ENCODE measurements at regions of chr22 and their contacts with region 1.

Region 1: GRCh38 chr22:17742527-17742902 is 31.8 kb downstream of the BID start:
- DNase-seq: peak; percentile 68 to 71
- ATAC-seq: peak; percentile 89 to 92
- H3K4me3 ChIP-seq: no peak overlapping the region
- H3K27ac ChIP-seq: no peak overlapping the region
- H3K4me1 ChIP-seq: no peaks in the 10 kb centered on the region
- CTCF ChIP-seq: peak; percentile 61
- EP300 ChIP-seq: no peak
- POLR2A ChIP-seq: no peak
- RAD21 ChIP-seq: peak; percentile 68 to 79

Region 2: GRCh38 chr22:17559188-17559587 is 183.3 kb before region 1 on chr22:
- CTCF ChIA-PET with region 1: interaction called, 19 read pairs
- POLR2A ChIA-PET with region 1: no interaction called
- DNase-seq: no peak
- ATAC-seq: no peak
- H3K4me3 ChIP-seq: no peak overlapping the region
- H3K27ac ChIP-seq: no peak overlapping the region
- H3K4me1 ChIP-seq: peaks cover 8% of the 10 kb centered on the region; the same call in 1 of the 3 replicates
- CTCF ChIP-seq: no peak
- EP300 ChIP-seq: no peak
- POLR2A ChIP-seq: no peak
- RAD21 ChIP-seq: no peak

Region 3: DNA sequence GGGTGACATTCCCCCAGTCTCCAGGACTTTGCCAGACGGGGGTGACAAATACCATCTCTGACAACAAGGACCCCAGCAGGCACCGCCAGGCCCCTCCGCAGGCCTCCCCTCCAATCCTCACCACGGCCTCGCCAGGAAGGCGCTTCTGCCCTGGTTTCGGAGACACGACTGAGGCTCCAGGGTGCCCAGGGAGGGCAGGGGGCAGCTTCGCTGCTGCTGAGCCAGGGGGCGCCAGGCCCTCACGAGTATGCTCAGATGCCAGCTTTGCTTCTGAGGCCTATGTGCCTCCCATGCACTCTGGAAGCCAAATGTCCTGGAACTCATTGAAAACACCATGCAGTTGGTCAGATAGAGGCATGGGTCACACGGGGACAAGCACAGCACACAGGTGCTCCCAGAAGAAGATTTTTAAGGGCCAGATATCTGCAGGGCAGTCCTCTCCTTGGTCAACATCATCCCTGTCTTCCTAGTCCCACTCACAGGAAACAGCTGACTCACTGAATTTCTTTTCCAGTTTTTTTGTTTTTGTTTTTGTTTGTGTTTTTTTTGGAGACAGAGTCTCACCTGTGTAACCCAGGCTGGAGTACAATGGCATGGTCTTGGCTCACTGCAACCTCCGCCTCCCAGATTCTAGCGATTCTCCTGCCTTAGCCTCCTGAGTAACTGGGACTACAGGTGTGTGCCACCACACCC is 11.9 kb after region 1 on chr22:
- CTCF ChIA-PET with region 1: interaction called, 42 read pairs
- POLR2A ChIA-PET with region 1: interaction called, 3 read pairs
- DNase-seq: peak in 1 of 2 experiments; percentile 28
- ATAC-seq: peak; percentile 24 to 69; a peak in 3 of 6 replicates
- H3K4me3 ChIP-seq: no peak overlapping the region
- H3K27ac ChIP-seq: 0 out of 6 replicates have a peak overlapping the region, but pooled peaks of 1 of the 2 experiments have one; percentile 2
- H3K4me1 ChIP-seq: no peaks in the 10 kb centered on the region
- CTCF ChIP-seq: no peak
- EP300 ChIP-seq: no peak
- POLR2A ChIP-seq: no peak
- RAD21 ChIP-seq: peak in 1 of 2 experiments; percentile 44; a peak in 2 of 5 replicates

Region 4: DNA sequence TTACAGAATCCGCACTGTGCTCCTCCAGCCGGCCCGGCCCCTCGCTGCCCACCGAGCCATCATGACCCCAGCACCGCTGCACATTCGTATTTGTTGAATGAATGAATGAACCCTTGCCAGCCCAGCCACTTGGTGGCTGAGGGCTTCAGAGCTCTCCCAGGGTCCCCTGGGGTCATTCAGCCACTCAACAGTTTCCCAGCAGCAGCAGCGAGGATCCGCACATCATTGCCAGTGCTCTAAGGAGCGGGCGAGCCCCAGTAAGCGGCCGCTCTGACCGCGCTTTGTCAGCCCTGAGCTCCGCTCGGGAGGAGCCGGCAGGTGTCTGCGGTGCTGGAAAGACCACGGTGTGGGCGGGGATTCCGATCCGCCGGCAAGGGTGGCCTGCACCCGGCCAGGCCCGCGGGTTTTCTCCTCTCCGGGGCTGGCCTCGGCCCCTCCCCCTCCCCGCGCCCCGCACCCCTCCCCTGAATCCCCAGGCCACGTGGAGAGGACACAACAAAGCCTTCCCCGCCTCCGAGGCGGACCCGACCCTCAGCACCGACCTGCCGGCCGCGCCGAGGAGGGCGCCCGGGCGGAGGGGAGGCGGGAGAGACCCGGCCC is 31.2 kb after region 1 on chr22:
- CTCF ChIA-PET with region 1: interaction called, 26 read pairs
- POLR2A ChIA-PET with region 1: no interaction called
- DNase-seq: peak; percentile 12 to 33
- ATAC-seq: peak; percentile 54 to 75
- H3K4me3 ChIP-seq: peak overlapping the region; percentile 98
- H3K27ac ChIP-seq: peak overlapping the region; percentile 95 to 98
- H3K4me1 ChIP-seq: peaks cover 17% of the 10 kb centered on the region
- CTCF ChIP-seq: no peak
- EP300 ChIP-seq: no peak
- POLR2A ChIP-seq: no peak
- RAD21 ChIP-seq: no peak

Region 5: DNA sequence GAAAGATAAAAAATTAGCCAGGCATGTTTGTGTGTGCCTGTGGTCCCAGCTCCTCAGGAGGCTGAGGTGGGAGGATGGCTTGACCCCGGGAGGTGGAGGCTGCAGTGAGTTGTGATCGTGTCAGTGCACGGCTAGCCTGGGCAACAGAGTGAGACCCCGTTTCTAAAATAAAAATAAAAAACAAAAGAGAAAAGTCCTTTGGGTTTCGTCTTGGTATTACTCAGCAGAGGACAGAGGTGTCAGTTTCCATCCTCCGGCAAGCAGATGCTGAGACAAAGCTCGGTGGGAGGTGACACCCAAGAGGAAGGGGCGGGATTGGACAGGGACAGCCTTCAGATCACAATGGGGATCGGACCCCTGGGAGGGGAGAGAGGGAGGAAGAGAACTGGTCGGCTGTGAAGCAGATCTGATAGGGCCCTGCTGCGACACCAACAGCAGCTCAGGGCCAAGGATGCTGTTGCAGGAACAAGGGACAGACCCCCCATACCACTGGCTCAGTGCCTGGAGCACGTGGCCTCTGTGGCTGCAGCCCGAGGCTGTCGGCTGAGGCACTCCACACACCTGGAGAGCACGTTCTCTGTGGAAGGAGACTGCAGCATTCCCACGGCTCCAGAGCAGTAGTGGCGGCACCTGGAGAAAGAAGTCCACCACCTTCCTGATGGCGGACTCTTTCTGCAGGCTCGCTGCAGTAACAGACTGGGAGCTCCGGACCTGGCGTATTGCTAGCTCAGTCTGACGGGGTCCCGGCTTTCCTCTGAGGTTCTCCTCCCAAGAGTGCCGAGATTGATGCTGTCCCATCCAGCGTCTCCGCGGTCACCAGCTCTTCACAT is 37.0 kb after region 1 on chr22:
- CTCF ChIA-PET with region 1: interaction called, 80 read pairs
- POLR2A ChIA-PET with region 1: no interaction called
- DNase-seq: no peak
- ATAC-seq: no peak
- H3K4me3 ChIP-seq: no peak overlapping the region
- H3K27ac ChIP-seq: no peak overlapping the region
- H3K4me1 ChIP-seq: peaks cover 26% of the 10 kb centered on the region
- CTCF ChIP-seq: no peak
- EP300 ChIP-seq: no peak
- POLR2A ChIP-seq: no peak
- RAD21 ChIP-seq: no peak

Region 6: DNA sequence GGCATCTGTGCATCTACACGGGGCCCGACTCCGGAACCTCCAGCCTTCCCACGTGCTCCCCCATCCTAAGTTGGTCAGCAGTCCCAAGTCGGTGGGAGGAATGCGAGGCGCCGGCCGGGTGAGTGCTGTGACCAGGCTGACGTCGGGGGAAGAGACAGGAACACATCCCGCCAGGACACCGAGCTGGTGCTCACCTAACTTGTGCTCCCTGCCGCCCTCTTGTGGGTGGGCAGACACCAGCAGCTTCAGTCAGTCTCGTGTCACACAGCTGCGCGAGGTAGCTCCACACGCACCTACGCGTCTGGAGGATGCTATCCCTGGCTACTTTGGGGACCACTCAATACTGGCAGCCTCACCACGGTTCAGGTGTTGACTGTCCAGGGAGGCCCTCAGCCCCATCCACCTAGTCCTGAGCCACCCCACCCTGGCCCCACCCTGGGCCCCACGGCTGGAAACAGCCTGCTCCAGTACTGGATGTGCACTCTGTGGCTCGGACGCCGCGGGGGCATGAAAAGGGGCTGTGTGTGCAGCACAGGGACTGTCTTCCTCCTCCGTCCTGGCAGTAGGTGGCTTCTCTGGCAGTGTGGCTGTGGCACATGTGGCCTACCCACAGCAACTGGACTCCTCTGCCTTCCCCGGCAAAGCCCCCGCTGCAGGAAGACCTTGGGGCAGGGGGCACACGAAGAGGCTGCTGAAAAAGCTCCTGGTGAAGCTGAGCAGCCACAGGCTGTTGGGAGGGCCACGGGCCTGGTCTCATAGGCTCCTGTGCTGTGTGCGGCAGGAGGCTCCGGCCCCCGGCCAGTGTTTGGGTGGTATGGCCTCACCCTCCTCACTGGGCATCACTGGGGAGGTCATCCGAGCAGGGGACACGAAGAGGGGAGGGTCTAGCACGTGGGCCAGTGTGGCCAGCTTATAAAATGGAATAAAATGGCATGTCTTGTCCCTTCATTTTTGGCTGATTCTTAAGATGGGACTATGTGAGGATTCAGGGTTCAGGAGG is 43.0 kb after region 1 on chr22:
- CTCF ChIA-PET with region 1: interaction called, 80 read pairs
- POLR2A ChIA-PET with region 1: no interaction called
- DNase-seq: peak; percentile 31 to 67
- ATAC-seq: peak; percentile 45 to 73; a peak in 4 of 6 replicates
- H3K4me3 ChIP-seq: no peak overlapping the region
- H3K27ac ChIP-seq: peak overlapping the region; percentile 45; a peak in 2 of 6 replicates
- H3K4me1 ChIP-seq: peaks cover 25% of the 10 kb centered on the region
- CTCF ChIP-seq: peak; percentile 46
- EP300 ChIP-seq: no peak
- POLR2A ChIP-seq: no peak
- RAD21 ChIP-seq: peak; percentile 38 to 46; a peak in 3 of 5 replicates

Region 7: GRCh38 chr22:17792299-17792698 is 49.8 kb after region 1 on chr22:
- CTCF ChIA-PET with region 1: interaction called, 80 read pairs
- POLR2A ChIA-PET with region 1: no interaction called
- DNase-seq: no peak
- ATAC-seq: peak in 1 of 2 experiments; percentile 39; a peak in 1 of 6 replicates
- H3K4me3 ChIP-seq: no peak overlapping the region
- H3K27ac ChIP-seq: no peak overlapping the region
- H3K4me1 ChIP-seq: no peaks in the 10 kb centered on the region
- CTCF ChIP-seq: no peak
- EP300 ChIP-seq: no peak
- POLR2A ChIP-seq: no peak
- RAD21 ChIP-seq: no peak